Ascending aorta (tissue), 2 donors: ENCODE measurements at regions of chr1 and their contacts with region 1.

Region 1: DNA sequence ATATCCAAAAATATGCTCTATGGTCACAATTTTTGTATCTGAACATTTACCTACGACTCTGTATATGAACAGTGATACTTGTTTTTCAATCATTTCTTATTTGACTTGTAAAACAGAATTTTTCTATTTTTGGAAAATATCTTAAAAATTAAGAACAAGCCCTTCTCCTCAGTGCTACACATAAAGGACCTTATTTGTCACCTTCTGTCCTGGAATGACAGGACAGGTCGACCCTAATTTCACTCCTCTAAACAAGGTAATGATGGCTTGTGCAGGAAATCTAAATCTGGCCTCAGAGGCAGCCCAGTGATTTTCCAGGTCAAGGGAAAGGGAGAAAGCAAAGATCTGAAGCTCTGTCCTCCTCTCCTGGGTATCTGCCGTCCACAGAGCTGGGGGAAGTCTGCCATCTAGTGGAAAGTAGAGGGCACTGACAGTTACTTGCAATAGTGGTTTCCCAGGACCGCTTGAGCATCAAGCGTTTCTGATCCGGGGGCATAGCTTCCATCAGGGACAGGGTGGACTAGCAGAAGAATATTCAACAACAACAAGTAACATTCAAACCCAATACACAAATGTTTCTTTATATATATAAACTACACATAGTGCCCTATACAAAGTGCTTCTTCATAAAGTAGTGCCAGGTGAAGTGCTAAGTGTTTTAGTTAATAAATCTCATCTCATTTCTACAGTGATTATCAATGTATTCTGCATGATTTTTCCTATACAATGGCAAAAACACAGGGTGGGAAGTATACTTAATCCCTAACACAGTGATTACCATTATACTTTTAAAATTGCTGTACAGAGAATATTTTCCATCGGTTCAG is 74.6 kb downstream of the SLC25A24 start:
- DNase-seq: peak in 1 of 2 donors; percentile 76
- H3K4me3 ChIP-seq: no peak overlapping the region
- H3K27ac ChIP-seq: no peak overlapping the region
- H3K4me1 ChIP-seq: no peaks in the 10 kb centered on the region
- H3K27me3 ChIP-seq: no peaks in the 10 kb centered on the region
- CTCF ChIP-seq: peak; percentile 72 to 92 (median 91)

Region 2: GRCh38 chr1:107339775-107340174 is 785.8 kb before region 1 on chr1:
- intact Hi-C with region 1: no loop called
- DNase-seq: no peak
- H3K4me3 ChIP-seq: no peak overlapping the region
- H3K27ac ChIP-seq: no peak overlapping the region
- H3K4me1 ChIP-seq: no peaks in the 10 kb centered on the region
- H3K27me3 ChIP-seq: no peaks in the 10 kb centered on the region
- CTCF ChIP-seq: no peak

Region 3: GRCh38 chr1:107782217-107782845 is 343.2 kb before region 1 on chr1:
- intact Hi-C with region 1: loop called (anchors 1 kb)
- DNase-seq: no peak
- H3K4me3 ChIP-seq: no peak overlapping the region
- H3K27ac ChIP-seq: no peak overlapping the region
- H3K4me1 ChIP-seq: no peaks in the 10 kb centered on the region
- H3K27me3 ChIP-seq: no peaks in the 10 kb centered on the region
- CTCF ChIP-seq: peak; percentile 45 to 73 (median 55)

Region 4: DNA sequence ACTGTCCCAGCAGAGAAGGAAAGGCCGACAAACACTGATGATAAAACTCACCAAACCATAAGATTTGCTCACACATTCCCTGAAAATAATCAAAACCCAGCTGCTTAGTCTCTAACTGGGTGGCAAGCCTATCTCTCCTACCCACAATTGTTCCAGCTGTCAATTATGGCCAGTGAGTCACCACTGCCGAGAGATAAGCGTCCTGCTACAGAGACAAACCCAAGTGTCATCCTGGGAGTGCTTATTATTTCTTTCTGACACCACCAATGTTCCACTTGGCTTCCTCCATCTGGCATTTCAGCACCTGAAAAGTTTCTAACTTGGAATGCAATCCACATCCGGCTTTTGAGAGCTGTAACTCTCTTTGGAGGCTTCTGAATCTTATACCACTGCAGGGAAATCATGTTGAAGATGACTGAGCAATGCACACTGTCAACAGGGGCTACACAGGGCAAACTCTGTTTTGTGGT is 109.0 kb before region 1 on chr1:
- intact Hi-C with region 1: no loop called
- DNase-seq: no peak
- H3K4me3 ChIP-seq: no peak overlapping the region
- H3K27ac ChIP-seq: no peak overlapping the region
- H3K4me1 ChIP-seq: no peaks in the 10 kb centered on the region
- H3K27me3 ChIP-seq: no peaks in the 10 kb centered on the region
- CTCF ChIP-seq: no peak

Region 5: DNA sequence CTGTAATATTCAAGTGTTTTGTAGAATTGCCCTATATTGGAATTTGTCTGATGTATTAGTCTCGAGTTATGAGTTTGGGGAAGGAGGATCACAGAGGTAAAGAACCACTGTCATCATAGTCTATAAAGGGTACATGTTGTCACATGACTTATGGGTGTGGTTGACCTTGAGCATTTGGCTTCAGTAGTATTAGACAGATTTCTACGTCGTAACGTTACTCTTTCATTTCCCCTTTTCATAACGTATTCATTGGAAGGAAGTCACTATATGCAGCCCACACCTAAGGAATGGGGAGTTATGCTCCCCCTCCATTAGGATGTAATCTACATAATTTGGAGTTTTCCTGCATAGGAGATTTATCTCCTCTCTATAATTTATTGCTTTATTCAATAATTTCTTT is 50.5 kb before region 1 on chr1:
- intact Hi-C with region 1: no loop called
- DNase-seq: no peak
- H3K4me3 ChIP-seq: no peak overlapping the region
- H3K27ac ChIP-seq: no peak overlapping the region
- H3K4me1 ChIP-seq: no peaks in the 10 kb centered on the region
- H3K27me3 ChIP-seq: no peaks in the 10 kb centered on the region
- CTCF ChIP-seq: no peak